ENCODE measurements at regions of chr3 and their contacts with region 1.

Region 1: GRCh38 chr3:43286115-43286840 is at the start of gene SNRK:
- DNase-seq: peak; percentile 90
- H3K4me3 ChIP-seq: peak within 1 kb of the TSS; percentile 54 to 65
- H3K27ac ChIP-seq: peak within 1 kb of the TSS; percentile 68 to 88
- H3K4me1 ChIP-seq: no peaks in the 10 kb centered on the region
- H3K27me3 ChIP-seq: no peaks in the 10 kb centered on the region
- CTCF ChIP-seq: peak; percentile 12 to 52 (median 32)
- POLR2A ChIP-seq: peak; percentile 97
- total RNA-seq, gene SNRK: 18.9 to 38.1 TPM

Region 2: DNA sequence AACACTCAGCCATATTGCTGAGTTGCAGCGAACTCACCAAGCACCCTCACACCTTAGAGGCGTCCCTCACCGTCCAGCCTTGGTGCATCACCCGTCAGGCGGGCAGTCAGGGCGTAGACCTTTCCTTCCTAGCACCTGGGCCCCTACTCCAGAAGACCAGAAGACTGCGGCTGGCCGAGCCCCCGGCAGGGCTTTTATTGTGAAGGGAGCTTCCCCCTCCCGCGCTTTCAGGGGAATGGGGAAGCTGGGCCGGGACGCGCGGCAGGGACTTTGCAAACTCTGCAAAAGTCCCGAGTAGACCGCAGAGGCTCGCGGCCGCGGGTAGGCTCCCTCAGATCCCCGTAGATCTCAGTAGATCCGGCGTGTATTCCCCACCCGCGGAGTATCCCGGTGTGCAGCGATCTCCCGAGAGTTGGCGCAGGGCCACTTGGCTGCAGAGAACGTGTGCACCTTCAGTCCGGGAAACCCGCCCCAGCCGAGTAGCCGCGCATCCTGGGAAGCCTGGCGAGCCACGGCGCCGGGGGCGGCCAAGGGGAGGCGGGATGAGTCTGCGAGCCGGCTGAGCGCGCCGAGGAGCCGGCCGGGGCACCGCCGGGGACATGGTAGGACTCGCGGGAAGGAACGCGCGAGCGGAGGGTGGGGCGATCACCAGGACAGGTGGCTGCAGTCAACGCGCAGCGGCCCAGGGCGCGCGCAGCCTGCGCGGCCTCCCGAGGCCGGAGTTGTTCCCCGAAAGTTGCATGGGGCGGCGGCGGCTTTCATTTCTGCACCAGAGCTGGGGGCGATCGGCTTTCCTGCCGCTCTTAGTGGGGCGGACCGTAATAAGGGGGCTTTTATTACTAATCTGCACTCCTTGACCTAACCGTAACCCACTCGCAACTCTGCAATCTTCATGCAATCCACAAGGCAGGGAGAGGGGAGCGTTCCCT is 307.0 kb before region 1 on chr3 and contains the start of gene GASK1A:
- intact Hi-C with region 1: loop called (anchors 10 kb)
- DNase-seq: peak; percentile 20
- H3K4me3 ChIP-seq: peak within 1 kb of the TSS; percentile 55 to 56
- H3K27ac ChIP-seq: peak within 1 kb of the TSS; percentile 53 to 59
- H3K4me1 ChIP-seq: no peaks in the 10 kb centered on the region
- H3K27me3 ChIP-seq: peaks cover 3% of the 10 kb centered on the region
- CTCF ChIP-seq: no peak
- POLR2A ChIP-seq: no peak
- total RNA-seq, gene GASK1A: 4.7 to 17.5 TPM

Region 3: GRCh38 chr3:43013743-43014155 is 272.5 kb before region 1 on chr3:
- intact Hi-C with region 1: no loop called
- DNase-seq: no peak
- H3K4me3 ChIP-seq: no peak overlapping the region
- H3K27ac ChIP-seq: no peak overlapping the region
- H3K4me1 ChIP-seq: no peaks in the 10 kb centered on the region
- H3K27me3 ChIP-seq: no peaks in the 10 kb centered on the region
- CTCF ChIP-seq: no peak
- POLR2A ChIP-seq: no peak

Region 4: DNA sequence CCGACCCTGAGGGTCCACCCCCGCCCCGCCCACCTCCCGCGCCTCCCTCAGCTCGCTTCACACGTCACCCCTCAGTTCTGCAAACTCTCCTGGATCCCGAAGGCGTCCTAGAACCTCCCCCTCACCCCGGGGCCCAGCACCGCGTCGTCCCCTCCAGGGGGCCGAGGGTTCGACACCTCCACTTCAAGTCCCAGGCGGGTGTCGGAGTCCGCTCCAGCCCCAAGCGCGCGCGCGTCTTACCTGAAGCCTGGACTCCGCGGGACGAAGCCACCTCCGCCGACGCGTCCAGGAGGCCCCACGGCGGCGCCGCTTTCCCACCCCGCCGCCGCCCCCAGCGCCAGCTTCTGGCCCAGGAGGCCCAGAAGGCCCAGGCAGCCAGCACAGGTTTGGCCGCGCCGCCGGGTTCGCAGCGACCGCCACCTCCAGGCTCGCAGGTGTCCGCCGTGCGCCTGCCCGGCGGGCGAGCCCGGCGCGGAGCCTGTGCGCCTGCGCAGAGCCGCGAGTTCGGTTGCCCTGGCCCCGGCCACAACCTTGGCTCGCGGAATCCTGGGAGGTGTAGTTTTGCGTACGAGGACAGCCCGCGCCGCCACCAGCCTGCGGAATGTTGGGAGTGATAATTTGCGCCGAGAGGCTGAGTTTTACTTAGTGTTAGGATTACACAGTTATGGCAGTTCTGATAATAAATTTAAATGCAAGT is 180.5 kb before region 1 on chr3 and contains the start of gene POMGNT2:
- intact Hi-C with region 1: loop called (anchors 10 kb)
- DNase-seq: peak; percentile 89
- H3K4me3 ChIP-seq: peak within 1 kb of the TSS; percentile 62 to 74
- H3K27ac ChIP-seq: peak within 1 kb of the TSS; percentile 57 to 58
- H3K4me1 ChIP-seq: no peaks in the 10 kb centered on the region
- H3K27me3 ChIP-seq: no peaks in the 10 kb centered on the region
- CTCF ChIP-seq: peak in 2 of 4 experiments; percentile 24 to 27
- POLR2A ChIP-seq: peak; percentile 44
- total RNA-seq, gene POMGNT2: 20.7 to 46.5 TPM

Region 5: GRCh38 chr3:43162230-43163084 is 123.8 kb before region 1 on chr3:
- intact Hi-C with region 1: loop called (anchors 10 kb)
- DNase-seq: no peak
- H3K4me3 ChIP-seq: no peak overlapping the region
- H3K27ac ChIP-seq: no peak overlapping the region
- H3K4me1 ChIP-seq: no peaks in the 10 kb centered on the region
- H3K27me3 ChIP-seq: no peaks in the 10 kb centered on the region
- CTCF ChIP-seq: peak in 3 of 4 experiments; percentile 20 to 34 (median 33)
- POLR2A ChIP-seq: no peak

Measured in prostate gland (tissue), 2 donors.